Lower lobe of right lung (tissue), 2 donors: ENCODE measurements at regions of chr6 and their contacts with region 1.

Region 1: GRCh38 chr6:20534295-20535262 is at the start of gene CDKAL1:
- DNase-seq: peak; percentile 90
- ATAC-seq: peak; percentile 95 to 97
- H3K4me3 ChIP-seq: peak within 1 kb of the TSS; percentile 67
- H3K27ac ChIP-seq: peak within 1 kb of the TSS; percentile 80
- H3K4me1 ChIP-seq: peaks cover 16% of the 10 kb centered on the region
- H3K27me3 ChIP-seq: no peaks in the 10 kb centered on the region
- CTCF ChIP-seq: no peak
- total RNA-seq, gene CDKAL1: 16.0 TPM

Region 2: DNA sequence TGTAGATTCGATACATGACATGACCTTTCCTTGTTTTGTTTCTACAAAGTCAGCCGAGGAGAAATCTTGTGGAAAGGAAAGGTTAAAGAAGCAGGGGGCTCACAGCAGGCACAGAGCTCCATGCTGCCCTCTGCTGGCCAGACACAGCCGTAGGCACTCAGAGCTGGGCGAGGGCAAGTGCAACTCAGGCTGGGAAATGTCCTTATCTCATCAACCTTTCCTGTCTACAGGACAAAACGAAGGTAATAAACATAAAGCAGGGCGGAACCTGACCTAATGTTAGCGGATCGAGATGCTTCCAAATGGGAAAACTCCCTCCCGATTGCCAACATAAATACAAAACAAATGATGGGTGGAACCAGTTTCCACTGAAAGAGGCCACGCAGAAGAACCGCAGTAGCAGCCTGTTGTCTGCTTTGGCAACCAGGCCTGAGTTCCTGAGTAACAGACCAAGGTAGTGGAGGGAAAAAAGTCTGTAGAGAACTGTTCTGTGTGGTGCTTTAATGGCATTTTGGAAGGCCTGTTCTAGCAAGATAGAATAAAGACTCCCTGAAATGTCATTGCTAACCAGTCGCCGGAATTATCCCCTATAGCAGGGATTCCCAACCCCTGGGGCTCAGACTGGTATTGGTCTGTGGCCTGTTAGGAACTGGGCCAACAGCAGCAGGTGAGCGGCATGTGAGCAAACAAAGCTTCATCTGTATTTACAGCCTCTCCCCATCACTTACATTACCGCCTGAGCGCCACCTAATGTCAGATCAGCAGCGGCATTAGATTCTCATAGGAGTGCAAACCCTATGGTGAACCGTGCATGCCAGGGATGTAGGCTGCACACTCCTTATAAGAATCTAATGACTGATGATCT is 407.6 kb before region 1 on chr6:
- intact Hi-C with region 1: no loop called
- DNase-seq: peak; percentile 76
- ATAC-seq: peak; percentile 87 to 92
- H3K4me3 ChIP-seq: no peak overlapping the region
- H3K27ac ChIP-seq: no peak overlapping the region
- H3K4me1 ChIP-seq: no peaks in the 10 kb centered on the region
- H3K27me3 ChIP-seq: no peaks in the 10 kb centered on the region
- CTCF ChIP-seq: peak; percentile 95

Region 3: DNA sequence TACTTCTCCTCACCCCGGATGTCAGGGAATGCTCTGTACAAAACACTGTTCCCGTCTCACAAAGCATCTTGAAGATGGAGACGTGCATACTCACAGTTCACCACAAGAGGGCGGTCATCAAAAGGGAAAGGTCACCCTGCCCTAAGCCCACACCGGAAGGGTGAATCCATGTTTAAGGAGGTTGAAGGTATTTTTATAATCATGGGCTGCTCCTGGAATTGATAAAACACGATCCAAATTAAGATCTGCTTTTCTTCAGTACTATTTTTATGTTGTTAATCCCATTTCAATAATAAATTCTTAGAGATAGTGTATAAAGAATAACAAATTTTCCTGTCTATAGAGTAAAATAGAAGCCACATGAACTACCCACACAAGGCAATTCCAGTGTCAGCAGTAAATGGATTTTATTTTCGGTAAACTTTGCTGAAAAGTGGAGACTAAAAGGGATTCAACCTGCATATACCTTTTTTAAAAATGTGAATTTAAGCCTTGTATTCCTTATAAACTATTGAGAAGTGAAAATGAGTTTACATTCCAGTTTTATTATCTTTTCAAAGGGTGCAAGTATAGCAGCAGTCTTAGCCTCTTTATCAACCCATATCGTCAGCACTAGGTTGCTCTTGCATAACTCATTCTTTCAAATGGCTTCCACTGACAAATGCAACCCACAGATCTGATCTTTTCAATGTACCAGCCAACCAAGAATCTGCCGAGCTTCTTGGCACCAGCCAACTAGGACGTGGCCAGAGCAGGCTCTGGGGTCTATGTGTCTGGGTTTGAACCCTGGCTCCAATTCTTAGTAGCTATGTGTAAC is 242.6 kb before region 1 on chr6:
- intact Hi-C with region 1: loop called (anchors 5 kb)
- DNase-seq: peak; percentile 57
- ATAC-seq: peak; percentile 90 to 94
- H3K4me3 ChIP-seq: no peak overlapping the region
- H3K27ac ChIP-seq: no peak overlapping the region
- H3K4me1 ChIP-seq: no peaks in the 10 kb centered on the region
- H3K27me3 ChIP-seq: no peaks in the 10 kb centered on the region
- CTCF ChIP-seq: peak; percentile 90

Region 4: GRCh38 chr6:20401205-20402091 is 133.1 kb before region 1 on chr6 and contains the start of gene E2F3:
- intact Hi-C with region 1: loop called (anchors 10 kb)
- DNase-seq: peak; percentile 100
- ATAC-seq: peak; percentile 96
- H3K4me3 ChIP-seq: peak within 1 kb of the TSS; percentile 79
- H3K27ac ChIP-seq: peak within 1 kb of the TSS; percentile 81
- H3K4me1 ChIP-seq: peaks cover 12% of the 10 kb centered on the region
- H3K27me3 ChIP-seq: no peaks in the 10 kb centered on the region
- CTCF ChIP-seq: no peak
- total RNA-seq, gene E2F3: 9.8 TPM

Region 5: GRCh38 chr6:20620043-20620442 is 85.5 kb after region 1 on chr6:
- intact Hi-C with region 1: no loop called
- DNase-seq: no peak
- ATAC-seq: no peak
- H3K4me3 ChIP-seq: no peak overlapping the region
- H3K27ac ChIP-seq: no peak overlapping the region
- H3K4me1 ChIP-seq: no peaks in the 10 kb centered on the region
- H3K27me3 ChIP-seq: no peaks in the 10 kb centered on the region
- CTCF ChIP-seq: no peak